ENCODE measurements at regions of chr11 and their contacts with region 1.

Region 1: GRCh38 chr11:40921246-40921645 is 538.2 kb downstream of the LRRC4C start:
- DNase-seq: no peak
- ATAC-seq: no peak
- H3K4me3 ChIP-seq: no peak overlapping the region
- H3K4me3 Mint-ChIP-seq: no peak overlapping the region
- H3K27ac ChIP-seq: no peak overlapping the region
- H3K27ac Mint-ChIP-seq: no peak overlapping the region
- H3K4me1 ChIP-seq: no peaks in the 10 kb centered on the region
- H3K4me1 Mint-ChIP-seq: no peaks in the 10 kb centered on the region
- H3K27me3 ChIP-seq: no peaks in the 10 kb centered on the region
- H3K27me3 Mint-ChIP-seq: no peaks in the 10 kb centered on the region

Region 2: GRCh38 chr11:39149214-39149613 is 1772.0 kb before region 1 on chr11:
- CTCF ChIA-PET with region 1: interaction called in 1 of 2 experiments, 10 read pairs
- POLR2A ChIA-PET with region 1: no interaction called
- DNase-seq: no peak
- ATAC-seq: no peak
- H3K4me3 ChIP-seq: no peak overlapping the region
- H3K4me3 Mint-ChIP-seq: no peak overlapping the region
- H3K27ac ChIP-seq: no peak overlapping the region
- H3K27ac Mint-ChIP-seq: no peak overlapping the region
- H3K4me1 ChIP-seq: no peaks in the 10 kb centered on the region
- H3K4me1 Mint-ChIP-seq: no peaks in the 10 kb centered on the region
- H3K27me3 ChIP-seq: no peaks in the 10 kb centered on the region
- H3K27me3 Mint-ChIP-seq: no peaks in the 10 kb centered on the region

Region 3: DNA sequence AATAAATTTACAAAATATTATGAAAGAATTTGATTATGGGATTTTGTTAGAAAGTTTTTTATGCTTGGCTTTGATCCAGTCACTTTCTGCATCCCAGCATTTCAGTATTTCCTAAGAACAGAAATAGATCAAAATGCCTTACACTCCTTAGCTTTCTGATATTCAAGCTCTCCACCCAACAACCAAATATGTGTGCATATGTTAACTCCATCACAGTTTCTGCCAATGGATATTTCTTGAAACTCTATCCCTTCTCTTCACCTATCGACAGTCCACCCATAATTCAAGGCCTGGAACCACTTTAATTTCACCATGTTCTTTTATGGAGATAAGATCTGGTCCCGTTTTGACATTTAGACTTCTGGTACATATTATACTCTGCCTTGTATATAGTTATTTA is 26.7 kb before region 1 on chr11:
- CTCF ChIA-PET with region 1: no interaction called
- POLR2A ChIA-PET with region 1: no interaction called
- DNase-seq: no peak
- ATAC-seq: no peak
- H3K4me3 ChIP-seq: no peak overlapping the region
- H3K4me3 Mint-ChIP-seq: no peak overlapping the region
- H3K27ac ChIP-seq: no peak overlapping the region
- H3K27ac Mint-ChIP-seq: no peak overlapping the region
- H3K4me1 ChIP-seq: no peaks in the 10 kb centered on the region
- H3K4me1 Mint-ChIP-seq: no peaks in the 10 kb centered on the region
- H3K27me3 ChIP-seq: no peaks in the 10 kb centered on the region
- H3K27me3 Mint-ChIP-seq: no peaks in the 10 kb centered on the region

Region 4: DNA sequence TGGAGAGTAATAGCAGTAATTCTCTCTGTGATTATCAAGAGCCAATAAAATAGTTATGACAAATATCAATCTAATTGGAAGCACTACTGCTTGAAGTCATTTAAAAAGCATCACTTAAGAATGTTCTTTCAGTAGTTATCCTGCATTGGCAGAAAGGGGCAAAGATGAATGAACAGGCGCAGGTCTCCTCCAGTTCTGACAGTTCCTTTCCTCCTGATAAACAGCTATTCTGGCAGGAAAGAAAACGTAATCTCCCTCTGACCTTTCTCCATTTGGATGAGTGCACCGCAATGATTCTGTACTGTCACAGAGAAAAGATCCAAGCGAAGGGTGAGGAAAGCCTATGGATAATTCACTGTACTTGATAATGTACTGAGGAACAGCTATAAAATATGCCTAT is 16.8 kb after region 1 on chr11:
- CTCF ChIA-PET with region 1: no interaction called
- POLR2A ChIA-PET with region 1: no interaction called
- DNase-seq: no peak
- ATAC-seq: no peak
- H3K4me3 ChIP-seq: no peak overlapping the region
- H3K4me3 Mint-ChIP-seq: no peak overlapping the region
- H3K27ac ChIP-seq: no peak overlapping the region
- H3K27ac Mint-ChIP-seq: no peak overlapping the region
- H3K4me1 ChIP-seq: no peaks in the 10 kb centered on the region
- H3K4me1 Mint-ChIP-seq: no peaks in the 10 kb centered on the region
- H3K27me3 ChIP-seq: no peaks in the 10 kb centered on the region
- H3K27me3 Mint-ChIP-seq: no peaks in the 10 kb centered on the region

Measured in T-cell (primary cell).